Adrenal gland (tissue), 19 donors: ENCODE measurements at regions of chr13 and their contacts with region 1.

Region 1: GRCh38 chr13:110575322-110576069 is 14.0 kb upstream of the RAB20 start:
- DNase-seq: peak; percentile 69 to 91 (median 82)
- H3K4me3 ChIP-seq: no peak overlapping the region
- H3K27ac ChIP-seq: peak overlapping the region in 2 of 5 donors; percentile 8 to 38
- H3K4me1 ChIP-seq: peaks cover 0 to 10% of the 10 kb centered on the region in 2 donors
- H3K27me3 ChIP-seq: no peaks in the 10 kb centered on the region
- CTCF ChIP-seq: no peak
- POLR2A ChIP-seq: no peak

Region 2: DNA sequence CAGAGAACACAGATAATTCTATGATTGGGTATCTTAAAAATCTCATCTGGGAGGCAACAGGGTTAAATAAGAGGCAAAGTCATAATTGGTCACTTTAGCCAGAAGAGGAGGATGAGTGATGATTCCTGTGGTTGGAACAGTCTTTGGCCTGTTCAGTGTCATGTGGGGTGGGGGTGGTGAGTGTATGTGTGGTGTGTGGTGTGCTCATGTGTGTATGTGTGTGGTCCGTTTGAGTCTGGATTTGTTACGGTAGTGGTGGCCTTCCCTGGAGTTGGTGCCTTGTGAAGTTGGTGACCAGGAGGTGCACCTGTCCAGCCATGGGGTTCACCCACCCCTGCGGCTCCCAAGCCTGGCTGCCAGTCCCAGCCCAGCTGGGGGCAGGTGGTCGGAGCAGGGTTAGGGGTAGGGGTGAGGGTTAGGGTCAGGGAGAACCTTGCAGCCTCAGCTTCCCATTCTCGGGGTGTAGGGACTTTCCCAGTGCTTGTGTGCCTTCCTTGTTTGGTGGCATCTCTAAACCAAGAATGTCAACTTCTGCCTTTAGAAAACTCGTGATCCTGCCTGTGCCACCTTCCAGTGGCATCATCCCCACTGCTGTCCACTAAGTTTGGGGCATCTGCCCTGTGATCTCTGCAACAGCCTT is 111.5 kb before region 1 on chr13:
- intact Hi-C with region 1: loop called in 1 of 2 experiments (anchors 10 kb)
- DNase-seq: no peak
- H3K4me3 ChIP-seq: no peak overlapping the region
- H3K27ac ChIP-seq: no peak overlapping the region
- H3K4me1 ChIP-seq: no peaks in the 10 kb centered on the region
- H3K27me3 ChIP-seq: no peaks in the 10 kb centered on the region
- CTCF ChIP-seq: no peak
- POLR2A ChIP-seq: no peak

Region 3: GRCh38 chr13:110869805-110870706 is 294.6 kb after region 1 on chr13:
- intact Hi-C with region 1: no loop called
- DNase-seq: peak; percentile 95 to 99 (median 99)
- H3K4me3 ChIP-seq: peak overlapping the region in 2 of 4 donors; percentile 3 to 33
- H3K27ac ChIP-seq: peak overlapping the region; percentile 73 to 92 (median 83)
- H3K4me1 ChIP-seq: peaks cover 7 to 22% of the 10 kb centered on the region in 2 donors
- H3K27me3 ChIP-seq: no peaks in the 10 kb centered on the region
- CTCF ChIP-seq: peak in 4 of 6 experiments; percentile 46 to 53 (median 50)
- POLR2A ChIP-seq: peak; percentile 14 to 74